MCF 10A (cell line): ENCODE measurements at regions of chr17 and their contacts with region 1.

Region 1: DNA sequence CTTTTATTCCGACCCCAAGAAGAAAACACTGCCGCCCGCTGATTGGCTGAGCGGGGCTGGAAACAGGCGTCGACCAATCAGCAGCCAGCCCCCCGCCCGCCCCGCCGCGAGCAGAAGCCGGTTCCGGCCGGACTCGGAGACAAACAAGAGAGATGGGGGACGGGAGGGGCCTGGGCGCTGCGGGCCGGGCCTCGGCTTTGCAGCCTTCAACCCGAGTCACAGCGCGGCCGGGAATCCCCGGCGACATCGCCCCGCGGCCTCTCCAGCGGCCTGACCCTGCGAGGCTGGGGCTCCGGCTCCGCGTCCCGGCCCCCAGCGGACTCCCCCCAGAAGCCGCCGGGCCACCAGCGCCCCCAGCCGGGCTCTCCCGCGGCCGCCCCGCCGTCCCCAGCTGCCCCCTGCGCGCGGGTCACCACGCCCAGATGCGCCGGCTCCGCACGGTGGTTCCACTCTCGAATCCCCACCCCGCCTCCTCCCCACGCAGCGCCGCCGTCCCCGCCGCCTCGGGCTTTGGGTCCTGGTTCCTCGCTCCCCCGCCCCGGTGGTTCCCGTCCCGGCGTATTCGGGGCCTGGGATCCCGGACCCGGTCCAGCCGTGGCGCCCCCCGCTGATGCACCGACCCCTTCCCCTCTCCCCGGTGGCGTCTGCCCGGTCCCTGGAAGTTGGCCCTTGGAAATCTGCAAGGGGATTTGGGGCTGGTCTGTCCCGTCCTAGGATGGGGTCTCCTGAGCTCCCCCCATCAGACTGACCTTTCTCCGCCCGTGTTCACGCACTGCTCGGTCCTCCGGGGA is 417 bp upstream of the SLC43A2 start:
- DNase-seq: peak; percentile 89
- H3K4me3 Mint-ChIP-seq: peak overlapping the region; percentile 95
- H3K27ac Mint-ChIP-seq: peak overlapping the region; percentile 77
- H3K4me1 Mint-ChIP-seq: peaks cover 24% of the 10 kb centered on the region
- H3K27me3 Mint-ChIP-seq: no peaks in the 10 kb centered on the region
- CTCF ChIP-seq: peak; percentile 30

Region 2: GRCh38 chr17:1260086-1260769 is 368.8 kb before region 1 on chr17:
- CTCF ChIA-PET with region 1: interaction called, 3 read pairs
- POLR2A ChIA-PET with region 1: no interaction called
- intact Hi-C with region 1: loop called (anchors 5 kb)
- DNase-seq: no peak
- H3K4me3 Mint-ChIP-seq: peak overlapping the region; percentile 72
- H3K27ac Mint-ChIP-seq: no peak overlapping the region
- H3K4me1 Mint-ChIP-seq: no peaks in the 10 kb centered on the region
- H3K27me3 Mint-ChIP-seq: no peaks in the 10 kb centered on the region
- CTCF ChIP-seq: no peak

Region 3: GRCh38 chr17:1590031-1590748 is 38.9 kb before region 1 on chr17:
- CTCF ChIA-PET with region 1: interaction called, 4 read pairs
- POLR2A ChIA-PET with region 1: interaction called, 20 read pairs
- intact Hi-C with region 1: loop called (anchors 5 kb)
- DNase-seq: peak; percentile 94
- H3K4me3 Mint-ChIP-seq: peak overlapping the region; percentile 52
- H3K27ac Mint-ChIP-seq: peak overlapping the region; percentile 64
- H3K4me1 Mint-ChIP-seq: peaks cover 11% of the 10 kb centered on the region
- H3K27me3 Mint-ChIP-seq: no peaks in the 10 kb centered on the region
- CTCF ChIP-seq: no peak

Region 4: GRCh38 chr17:1693339-1693738 is 64.3 kb after region 1 on chr17:
- CTCF ChIA-PET with region 1: no interaction called
- POLR2A ChIA-PET with region 1: no interaction called
- intact Hi-C with region 1: no loop called
- DNase-seq: no peak
- H3K4me3 Mint-ChIP-seq: no peak overlapping the region
- H3K27ac Mint-ChIP-seq: no peak overlapping the region
- H3K4me1 Mint-ChIP-seq: peaks cover 5% of the 10 kb centered on the region
- H3K27me3 Mint-ChIP-seq: no peaks in the 10 kb centered on the region
- CTCF ChIP-seq: no peak